ENCODE measurements at regions of chr17 and their contacts with region 1.

Region 1: DNA sequence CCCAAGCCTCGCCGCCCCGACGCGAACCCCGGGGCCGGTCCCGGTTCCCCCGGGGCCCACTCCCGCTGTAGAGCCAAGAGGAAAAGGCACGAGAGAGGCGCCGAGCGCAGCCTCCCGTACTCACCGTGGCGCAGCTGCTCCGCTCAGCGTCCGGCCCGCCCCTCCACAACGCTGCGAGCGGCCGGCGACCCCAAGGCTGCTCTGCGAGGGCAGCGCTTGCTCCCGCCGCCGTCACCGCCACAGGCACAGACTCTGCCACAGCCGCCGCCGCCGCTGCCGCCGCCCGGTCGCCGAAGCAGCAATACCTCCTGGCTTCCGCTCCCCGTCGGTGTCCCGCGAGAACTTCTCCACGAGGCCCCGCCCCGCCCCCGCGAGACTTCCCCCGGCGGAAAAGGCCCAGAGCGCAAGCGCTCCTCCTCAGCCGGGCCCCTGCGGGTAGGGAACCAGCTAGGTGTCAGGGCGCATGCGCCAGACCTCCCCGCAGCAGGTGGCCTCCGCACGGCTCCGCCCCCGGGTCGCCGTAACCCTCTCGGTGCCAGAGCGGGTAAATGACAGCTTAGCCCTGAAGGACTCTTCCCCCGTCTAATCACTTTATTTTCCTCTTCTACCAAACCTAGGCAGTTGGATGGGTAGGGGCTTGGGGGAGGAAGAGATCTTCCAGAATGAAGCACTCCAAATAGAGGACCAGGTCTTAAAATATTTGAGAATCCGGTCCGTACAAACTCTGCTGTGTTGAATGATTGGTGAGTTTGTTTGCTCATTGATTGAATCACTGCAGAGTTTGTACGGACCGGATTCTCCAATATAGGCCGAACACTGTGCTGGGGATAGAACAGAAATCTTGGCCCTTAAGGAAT is at the start of gene GRB2:
- DNase-seq: peak; percentile 100
- H3K4me3 Mint-ChIP-seq: peak within 1 kb of the TSS; percentile 97
- H3K27ac Mint-ChIP-seq: peak within 1 kb of the TSS; percentile 97
- H3K4me1 Mint-ChIP-seq: peaks cover 47% of the 10 kb centered on the region
- H3K27me3 Mint-ChIP-seq: no peaks in the 10 kb centered on the region
- total RNA-seq, gene GRB2: 172 and 183 TPM in 2 replicates

Region 2: GRCh38 chr17:75182569-75183450 is 222.8 kb before region 1 on chr17 and contains the start of gene SUMO2:
- intact Hi-C with region 1: loop called (anchors 10 kb)
- DNase-seq: peak; percentile 93
- H3K4me3 Mint-ChIP-seq: peak within 1 kb of the TSS; percentile 99
- H3K27ac Mint-ChIP-seq: peak within 1 kb of the TSS; percentile 98
- H3K4me1 Mint-ChIP-seq: peaks cover 38% of the 10 kb centered on the region
- H3K27me3 Mint-ChIP-seq: no peaks in the 10 kb centered on the region
- total RNA-seq, gene SUMO2: 649 and 656 TPM in 2 replicates

Region 3: DNA sequence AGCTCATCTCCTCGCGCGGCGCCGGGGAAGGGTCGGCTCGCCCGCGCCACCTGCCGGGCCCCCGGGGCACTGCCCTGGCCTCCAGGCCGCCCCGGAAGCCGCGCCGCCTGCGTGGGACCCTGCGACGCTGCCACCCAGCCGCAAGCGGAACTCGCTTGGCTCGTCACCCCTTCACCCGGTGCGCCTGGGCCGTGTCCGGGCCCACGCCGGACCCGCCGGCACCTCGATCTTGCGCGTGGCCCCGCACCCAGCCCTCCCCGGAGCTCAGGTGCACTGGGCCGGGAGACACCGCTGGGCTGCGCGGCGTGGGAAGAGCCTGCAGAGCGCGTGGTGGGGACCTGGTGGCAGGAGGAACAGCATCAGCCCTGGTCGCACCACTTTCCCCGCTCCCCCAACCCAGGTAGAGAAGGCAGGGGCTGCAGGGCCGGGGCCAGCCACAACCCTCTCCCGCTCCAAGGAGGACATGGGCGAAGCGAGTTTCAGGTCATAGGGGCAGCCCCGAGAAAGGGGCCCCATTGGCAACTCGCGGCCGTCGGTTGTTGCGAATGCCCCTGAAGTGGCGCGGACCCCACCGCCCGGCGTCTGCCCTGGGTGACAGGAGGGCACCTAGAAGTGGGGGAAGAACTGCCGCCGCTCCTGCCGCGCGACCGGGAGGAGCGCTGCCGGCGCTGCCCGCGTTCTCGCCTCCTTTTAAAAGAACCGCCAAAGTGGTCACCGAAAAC is 134.2 kb before region 1 on chr17:
- intact Hi-C with region 1: loop called (anchors 1 kb)
- DNase-seq: peak; percentile 90
- H3K4me3 Mint-ChIP-seq: peak overlapping the region; percentile 92
- H3K27ac Mint-ChIP-seq: peak overlapping the region; percentile 86
- H3K4me1 Mint-ChIP-seq: peaks cover 36% of the 10 kb centered on the region
- H3K27me3 Mint-ChIP-seq: no peaks in the 10 kb centered on the region

Region 4: GRCh38 chr17:75338335-75338734 is 67.3 kb before region 1 on chr17:
- intact Hi-C with region 1: loop called (anchors 2 kb)
- DNase-seq: no peak
- H3K4me3 Mint-ChIP-seq: peak overlapping the region; percentile 63
- H3K27ac Mint-ChIP-seq: peak overlapping the region; percentile 90
- H3K4me1 Mint-ChIP-seq: peaks cover 74% of the 10 kb centered on the region
- H3K27me3 Mint-ChIP-seq: no peaks in the 10 kb centered on the region

Region 5: DNA sequence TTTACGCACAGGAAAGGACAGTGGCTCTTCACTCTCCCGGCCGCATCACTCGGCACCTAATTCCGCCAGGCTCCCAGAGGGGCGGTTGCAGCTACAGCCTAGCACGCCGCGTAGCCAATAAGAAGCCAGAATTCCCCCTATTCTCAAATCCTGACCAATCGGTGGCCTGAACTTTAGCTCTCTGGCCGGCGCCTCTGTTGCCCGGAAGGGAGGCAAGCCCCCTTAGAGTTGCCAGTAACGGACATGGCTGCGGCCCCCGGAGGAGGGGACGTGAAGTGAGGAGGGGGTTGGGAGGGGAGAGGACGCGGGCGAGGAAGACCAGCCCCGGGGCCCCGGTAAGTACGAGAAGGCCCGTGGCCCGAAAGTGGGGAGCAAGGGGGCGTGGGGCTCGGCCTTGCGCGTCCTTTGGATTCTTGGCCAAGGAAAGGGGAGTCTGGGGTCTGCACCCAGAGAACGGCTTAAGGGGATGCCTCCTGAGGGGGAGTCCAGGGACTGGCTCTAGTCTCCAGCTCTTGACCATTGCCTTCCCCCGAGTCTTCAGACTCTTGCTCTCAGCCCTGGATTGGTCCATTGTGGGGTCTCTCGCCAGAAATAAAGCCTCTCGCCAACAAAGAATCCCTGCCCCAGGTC is 50.9 kb after region 1 on chr17 and contains the start of gene TMEM94:
- intact Hi-C with region 1: loop called (anchors 1 kb)
- DNase-seq: peak; percentile 89
- H3K4me3 Mint-ChIP-seq: peak within 1 kb of the TSS; percentile 92
- H3K27ac Mint-ChIP-seq: peak within 1 kb of the TSS; percentile 84
- H3K4me1 Mint-ChIP-seq: peaks cover 35% of the 10 kb centered on the region
- H3K27me3 Mint-ChIP-seq: no peaks in the 10 kb centered on the region
- total RNA-seq, gene TMEM94: 67.0 and 70.4 TPM in 2 replicates

Measured in activated T-helper 1 cell treated with anti-CD3 and anti-CD28 coated beads, Interleukin-12 subunit alpha, Interleukin-12 subunit beta, Interleukin-2, Interleukin-4 antibody, amounts not matched to agents 30 ng/mL and 10 ng/mL and 1 ng/mL, durations not matched to agents 14 hours and 24 hours and 36 hours (primary cell).